Upper lobe of right lung (tissue), 1 donor: ENCODE measurements at regions of chr15 and their contacts with region 1.

Region 1: DNA sequence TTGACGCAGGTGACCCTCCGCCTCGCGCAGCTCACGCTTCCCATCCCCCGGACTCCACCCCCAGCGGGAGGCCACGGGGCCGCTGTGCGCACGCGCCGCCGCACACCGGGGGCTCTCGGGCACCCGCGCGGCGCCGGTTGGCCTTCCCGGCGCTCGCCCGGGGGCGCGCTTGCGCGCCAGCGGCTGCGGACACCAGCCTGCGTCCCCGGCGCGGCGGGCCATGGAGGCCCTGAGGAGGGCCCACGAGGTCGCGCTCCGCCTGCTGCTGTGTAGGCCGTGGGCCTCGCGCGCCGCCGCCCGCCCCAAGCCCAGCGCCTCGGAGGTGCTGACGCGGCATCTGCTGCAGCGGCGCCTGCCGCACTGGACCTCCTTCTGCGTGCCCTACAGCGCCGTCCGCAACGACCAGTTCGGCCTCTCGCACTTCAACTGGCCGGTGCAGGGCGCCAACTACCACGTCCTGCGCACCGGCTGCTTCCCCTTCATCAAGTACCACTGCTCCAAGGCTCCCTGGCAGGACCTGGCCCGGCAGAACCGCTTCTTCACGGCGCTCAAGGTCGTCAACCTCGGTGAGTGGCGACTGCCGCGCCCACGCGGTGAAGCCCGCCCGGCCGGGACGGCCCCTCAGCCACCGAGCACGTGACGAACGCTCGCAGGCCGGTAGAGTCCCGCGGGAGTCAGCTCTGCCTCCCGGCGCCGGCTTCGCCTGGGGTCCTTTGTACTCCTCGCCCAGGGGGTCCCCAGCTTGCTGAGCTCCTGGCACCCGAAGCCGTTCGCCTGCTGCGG is at the start of gene C15orf61:
- DNase-seq: peak; percentile 95
- ATAC-seq: peak; percentile 96
- H3K4me3 ChIP-seq: peak within 1 kb of the TSS; percentile 87
- H3K27ac ChIP-seq: peak within 1 kb of the TSS; percentile 96
- H3K4me1 ChIP-seq: peaks cover 22% of the 10 kb centered on the region
- H3K27me3 ChIP-seq: no peaks in the 10 kb centered on the region
- CTCF ChIP-seq: no peak
- total RNA-seq, gene C15orf61: 7.4 TPM

Region 2: GRCh38 chr15:67456677-67457529 is 64.3 kb before region 1 on chr15:
- intact Hi-C with region 1: no loop called
- DNase-seq: peak; percentile 90
- ATAC-seq: peak; percentile 97
- H3K4me3 ChIP-seq: no peak overlapping the region
- H3K27ac ChIP-seq: no peak overlapping the region
- H3K4me1 ChIP-seq: no peaks in the 10 kb centered on the region
- H3K27me3 ChIP-seq: no peaks in the 10 kb centered on the region
- CTCF ChIP-seq: peak; percentile 93

Region 3: GRCh38 chr15:67479781-67480505 is 41.3 kb before region 1 on chr15:
- intact Hi-C with region 1: no loop called
- DNase-seq: no peak
- ATAC-seq: no peak
- H3K4me3 ChIP-seq: no peak overlapping the region
- H3K27ac ChIP-seq: no peak overlapping the region
- H3K4me1 ChIP-seq: no peaks in the 10 kb centered on the region
- H3K27me3 ChIP-seq: no peaks in the 10 kb centered on the region
- CTCF ChIP-seq: no peak

Region 4: GRCh38 chr15:67670647-67671305 is 149.6 kb after region 1 on chr15:
- intact Hi-C with region 1: no loop called
- DNase-seq: no peak
- ATAC-seq: no peak
- H3K4me3 ChIP-seq: no peak overlapping the region
- H3K27ac ChIP-seq: no peak overlapping the region
- H3K4me1 ChIP-seq: no peaks in the 10 kb centered on the region
- H3K27me3 ChIP-seq: no peaks in the 10 kb centered on the region
- CTCF ChIP-seq: no peak

Region 5: DNA sequence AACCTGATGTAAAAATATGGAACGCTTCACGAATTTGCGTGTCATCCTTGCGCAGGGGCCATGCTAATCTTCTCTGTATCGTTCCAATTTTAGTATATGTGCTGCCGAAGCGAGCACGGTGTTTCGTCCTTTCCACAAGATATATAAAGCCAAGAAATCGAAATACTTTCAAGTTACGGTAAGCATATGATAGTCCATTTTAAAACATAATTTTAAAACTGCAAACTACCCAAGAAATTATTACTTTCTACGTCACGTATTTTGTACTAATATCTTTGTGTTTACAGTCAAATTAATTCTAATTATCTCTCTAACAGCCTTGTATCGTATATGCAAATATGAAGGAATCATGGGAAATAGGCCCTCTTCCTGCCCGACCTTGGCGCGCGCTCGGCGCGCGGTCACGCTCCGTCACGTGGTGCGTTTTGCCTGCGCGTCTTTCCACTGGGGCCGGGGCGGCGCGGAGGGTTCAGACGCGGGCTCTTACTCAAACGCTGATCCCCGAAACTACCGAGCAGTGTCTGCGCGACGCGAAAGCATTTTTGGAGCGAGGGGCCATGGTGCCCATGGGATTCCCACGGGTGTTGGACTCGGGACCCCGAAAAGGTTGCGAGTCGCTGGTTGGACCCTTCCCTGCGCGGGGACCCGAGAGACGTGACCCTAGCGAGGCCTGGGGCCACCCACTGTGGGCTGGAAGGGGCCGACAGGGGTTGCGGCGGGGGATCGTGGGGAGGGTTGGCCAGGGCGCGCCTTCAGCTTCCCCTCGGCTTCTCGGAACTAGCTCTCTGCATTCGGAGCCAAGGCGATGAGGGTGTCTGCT is 318.9 kb after region 1 on chr15 and contains the start of gene RNU6-1:
- intact Hi-C with region 1: loop called (anchors 10 kb)
- DNase-seq: peak; percentile 97
- ATAC-seq: peak; percentile 88
- H3K4me3 ChIP-seq: peak within 1 kb of the TSS; percentile 91
- H3K27ac ChIP-seq: peak within 1 kb of the TSS; percentile 98
- H3K4me1 ChIP-seq: peaks cover 33% of the 10 kb centered on the region
- H3K27me3 ChIP-seq: peaks cover 11% of the 10 kb centered on the region
- CTCF ChIP-seq: no peak
- total RNA-seq, gene RNU6-1: not detected